Activated CD4-positive, alpha-beta T cell treated with anti-CD3 and anti-CD28 coated beads for 36 hours (primary cell): ENCODE measurements at regions of chr7 and their contacts with region 1.

Region 1: GRCh38 chr7:2354186-2354938 is at the start of gene EIF3B:
- DNase-seq: peak; percentile 94
- ATAC-seq: peak; percentile 90
- H3K4me3 Mint-ChIP-seq: peak within 1 kb of the TSS; percentile 86
- H3K27ac Mint-ChIP-seq: peak within 1 kb of the TSS; percentile 99
- H3K4me1 Mint-ChIP-seq: peaks cover 37% of the 10 kb centered on the region
- H3K27me3 Mint-ChIP-seq: no peaks in the 10 kb centered on the region
- total RNA-seq, gene EIF3B: 185 to 227 TPM

Region 2: GRCh38 chr7:1159891-1160668 is 1194.3 kb before region 1 on chr7 and contains the start of gene ZFAND2A:
- CTCF ChIA-PET with region 1: no interaction called
- POLR2A ChIA-PET with region 1: no interaction called
- intact Hi-C with region 1: loop called in 1 of 2 experiments (anchors 1 kb)
- DNase-seq: peak; percentile 99
- ATAC-seq: peak; percentile 98
- H3K4me3 Mint-ChIP-seq: peak within 1 kb of the TSS; percentile 84
- H3K27ac Mint-ChIP-seq: peak within 1 kb of the TSS; percentile 90
- H3K4me1 Mint-ChIP-seq: peaks cover 22% of the 10 kb centered on the region
- H3K27me3 Mint-ChIP-seq: no peaks in the 10 kb centered on the region
- total RNA-seq, gene ZFAND2A: 21.6 to 25.2 TPM

Region 3: DNA sequence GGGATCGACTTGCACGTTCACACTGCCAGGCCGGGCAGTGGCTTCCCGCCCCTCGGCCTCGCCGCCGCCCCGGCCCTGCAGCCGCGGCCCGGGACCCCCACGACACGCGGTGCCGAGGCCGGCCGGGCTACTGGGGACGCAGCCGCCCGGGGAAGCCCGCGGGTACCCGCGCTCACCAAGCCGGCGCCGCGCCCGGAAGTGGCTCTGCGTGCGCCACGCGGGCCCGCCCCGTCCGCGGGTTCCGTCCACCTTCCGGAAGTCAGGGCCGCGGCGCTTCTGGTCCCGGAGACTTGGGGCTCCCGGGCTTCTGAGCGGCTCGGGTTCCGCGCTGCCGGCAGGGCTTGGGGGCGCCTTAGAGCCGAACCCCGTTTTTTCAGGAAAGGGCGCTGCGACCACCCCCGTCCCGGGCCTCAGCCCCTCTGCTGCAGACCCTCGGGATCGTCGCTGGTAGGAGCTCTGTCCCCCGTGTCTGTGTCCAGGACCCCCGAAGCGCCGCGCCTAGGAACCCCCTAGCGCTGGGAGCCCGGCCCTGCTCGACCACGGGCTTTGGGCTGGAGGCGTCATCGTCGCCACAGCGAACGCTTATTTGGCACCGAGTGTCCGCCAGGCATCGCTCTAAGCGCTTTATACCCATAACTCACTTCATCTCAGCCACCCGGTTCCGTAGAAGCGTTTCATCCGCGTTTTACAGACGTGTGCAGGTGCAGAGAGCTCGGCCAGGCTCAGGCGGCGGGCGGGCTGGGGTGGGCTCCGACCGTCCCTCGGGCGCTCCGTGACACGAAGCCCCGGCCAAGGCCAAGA is 784.3 kb before region 1 on chr7 and contains the start of gene PSMG3:
- CTCF ChIA-PET with region 1: interaction called, 3 read pairs
- POLR2A ChIA-PET with region 1: no interaction called
- intact Hi-C with region 1: loop called in 1 of 2 experiments (anchors 2 kb)
- DNase-seq: peak; percentile 94
- ATAC-seq: peak; percentile 95
- H3K4me3 Mint-ChIP-seq: peak within 1 kb of the TSS; percentile 86
- H3K27ac Mint-ChIP-seq: peak within 1 kb of the TSS; percentile 92
- H3K4me1 Mint-ChIP-seq: peaks cover 37% of the 10 kb centered on the region
- H3K27me3 Mint-ChIP-seq: no peaks in the 10 kb centered on the region
- total RNA-seq, gene PSMG3: 21.4 to 33.0 TPM

Region 4: GRCh38 chr7:1940402-1940786 is 414.0 kb before region 1 on chr7:
- CTCF ChIA-PET with region 1: no interaction called
- POLR2A ChIA-PET with region 1: no interaction called
- intact Hi-C with region 1: loop called in 1 of 2 experiments (anchors 5 kb)
- DNase-seq: peak; percentile 96
- ATAC-seq: peak; percentile 90
- H3K4me3 Mint-ChIP-seq: peak overlapping the region; percentile 81
- H3K27ac Mint-ChIP-seq: peak overlapping the region; percentile 93
- H3K4me1 Mint-ChIP-seq: peaks cover 74% of the 10 kb centered on the region
- H3K27me3 Mint-ChIP-seq: no peaks in the 10 kb centered on the region

Region 5: GRCh38 chr7:2241580-2242540 is 112.5 kb before region 1 on chr7 and contains the starts of genes MRM2 and NUDT1:
- CTCF ChIA-PET with region 1: interaction called, 3 read pairs
- POLR2A ChIA-PET with region 1: interaction called, 3 read pairs
- intact Hi-C with region 1: loop called (anchors 1 to 5 kb)
- DNase-seq: peak; percentile 84
- ATAC-seq: peak; percentile 82
- H3K4me3 Mint-ChIP-seq: peak within 1 kb of the TSS; percentile 88
- H3K27ac Mint-ChIP-seq: peak within 1 kb of the TSS; percentile 88
- H3K4me1 Mint-ChIP-seq: peaks cover 10% of the 10 kb centered on the region
- H3K27me3 Mint-ChIP-seq: no peaks in the 10 kb centered on the region
- total RNA-seq, gene MRM2: 28.7 to 32.1 TPM
- total RNA-seq, gene NUDT1: 52.5 to 100 TPM

Region 6: DNA sequence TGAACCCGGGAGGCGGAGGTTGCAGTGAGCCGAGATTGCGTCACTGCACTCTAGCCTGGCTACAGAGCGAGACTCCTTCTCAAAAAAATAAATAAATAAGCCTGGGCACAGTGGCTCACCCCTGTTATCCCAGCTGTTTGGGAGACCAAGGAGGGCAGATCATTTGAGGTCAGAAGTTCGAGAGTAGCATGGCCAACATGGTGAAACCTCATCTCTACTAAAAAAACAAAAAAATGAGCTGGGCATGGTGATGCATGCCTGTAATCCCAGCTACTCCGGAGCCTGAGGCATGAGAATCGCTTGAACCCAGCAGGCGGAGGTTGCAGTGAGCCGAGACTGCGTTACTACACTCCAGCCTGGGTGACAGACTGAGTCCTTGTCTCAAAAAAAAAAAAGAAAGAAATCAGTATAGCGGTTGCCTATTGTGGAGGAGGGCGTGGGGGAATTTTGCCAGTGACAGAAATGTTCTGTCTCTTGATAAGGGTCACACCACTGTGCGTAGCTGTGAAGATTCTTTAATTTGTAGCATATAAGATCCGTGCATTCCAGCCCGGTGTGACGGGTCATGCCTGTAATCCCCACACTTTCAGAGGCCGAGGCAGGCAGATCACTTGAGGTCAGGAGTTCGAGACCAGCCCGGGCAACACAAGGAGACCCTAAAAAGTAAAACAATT is 17.6 kb before region 1 on chr7:
- CTCF ChIA-PET with region 1: no interaction called
- POLR2A ChIA-PET with region 1: interaction called, 10 read pairs
- intact Hi-C with region 1: no loop called
- DNase-seq: no peak
- ATAC-seq: no peak
- H3K4me3 Mint-ChIP-seq: no peak overlapping the region
- H3K27ac Mint-ChIP-seq: no peak overlapping the region
- H3K4me1 Mint-ChIP-seq: no peaks in the 10 kb centered on the region
- H3K27me3 Mint-ChIP-seq: no peaks in the 10 kb centered on the region

Region 7: DNA sequence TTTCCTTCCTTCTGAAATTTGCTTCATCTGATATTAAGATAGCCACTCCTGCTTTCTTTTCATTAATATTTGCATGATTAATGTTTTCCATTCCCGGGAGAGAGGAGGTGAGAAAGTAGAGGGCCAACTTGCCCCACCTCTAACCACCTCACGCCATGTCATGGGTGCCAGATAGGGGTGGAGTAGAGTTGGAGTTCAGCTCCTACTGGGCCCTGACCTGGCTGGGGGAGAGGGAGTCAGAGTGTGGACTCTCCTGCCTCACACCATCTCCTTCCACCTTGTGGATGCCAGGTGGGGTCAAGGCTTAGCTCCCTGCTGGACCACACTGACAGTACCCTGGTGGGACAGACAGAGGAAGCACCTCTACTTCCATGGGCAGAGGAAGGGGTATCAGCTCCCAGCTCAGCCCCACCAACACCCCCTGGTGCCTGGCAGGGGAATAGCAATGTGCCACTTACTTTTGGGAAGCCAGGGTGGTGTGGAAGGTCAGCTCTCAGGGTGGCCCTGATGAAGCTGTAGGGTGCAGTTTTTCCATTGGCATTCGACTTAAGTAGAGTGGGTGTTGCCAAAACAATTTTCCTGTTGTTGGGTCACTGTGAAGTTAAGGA is 77.0 kb after region 1 on chr7:
- CTCF ChIA-PET with region 1: no interaction called
- POLR2A ChIA-PET with region 1: no interaction called
- intact Hi-C with region 1: no loop called
- DNase-seq: peak; percentile 68
- ATAC-seq: peak; percentile 76
- H3K4me3 Mint-ChIP-seq: no peak overlapping the region
- H3K27ac Mint-ChIP-seq: no peak overlapping the region
- H3K4me1 Mint-ChIP-seq: peaks cover 5% of the 10 kb centered on the region
- H3K27me3 Mint-ChIP-seq: no peaks in the 10 kb centered on the region

Region 8: GRCh38 chr7:2632733-2633537 is 278.6 kb after region 1 on chr7:
- CTCF ChIA-PET with region 1: no interaction called
- POLR2A ChIA-PET with region 1: interaction called, 3 read pairs
- intact Hi-C with region 1: loop called in 1 of 2 experiments (anchors 1 kb)
- DNase-seq: peak; percentile 77
- ATAC-seq: peak; percentile 7
- H3K4me3 Mint-ChIP-seq: peak overlapping the region; percentile 91
- H3K27ac Mint-ChIP-seq: peak overlapping the region; percentile 84
- H3K4me1 Mint-ChIP-seq: peaks cover 14% of the 10 kb centered on the region
- H3K27me3 Mint-ChIP-seq: no peaks in the 10 kb centered on the region

Region 9: GRCh38 chr7:3415861-3416312 is 1061.5 kb after region 1 on chr7:
- CTCF ChIA-PET with region 1: no interaction called
- POLR2A ChIA-PET with region 1: no interaction called
- intact Hi-C with region 1: no loop called
- DNase-seq: no peak
- ATAC-seq: no peak
- H3K4me3 Mint-ChIP-seq: no peak overlapping the region
- H3K27ac Mint-ChIP-seq: no peak overlapping the region
- H3K4me1 Mint-ChIP-seq: peaks cover 4% of the 10 kb centered on the region
- H3K27me3 Mint-ChIP-seq: peaks cover 9% of the 10 kb centered on the region